ENCODE measurements at regions of chr12 and their contacts with region 1.

Region 1: DNA sequence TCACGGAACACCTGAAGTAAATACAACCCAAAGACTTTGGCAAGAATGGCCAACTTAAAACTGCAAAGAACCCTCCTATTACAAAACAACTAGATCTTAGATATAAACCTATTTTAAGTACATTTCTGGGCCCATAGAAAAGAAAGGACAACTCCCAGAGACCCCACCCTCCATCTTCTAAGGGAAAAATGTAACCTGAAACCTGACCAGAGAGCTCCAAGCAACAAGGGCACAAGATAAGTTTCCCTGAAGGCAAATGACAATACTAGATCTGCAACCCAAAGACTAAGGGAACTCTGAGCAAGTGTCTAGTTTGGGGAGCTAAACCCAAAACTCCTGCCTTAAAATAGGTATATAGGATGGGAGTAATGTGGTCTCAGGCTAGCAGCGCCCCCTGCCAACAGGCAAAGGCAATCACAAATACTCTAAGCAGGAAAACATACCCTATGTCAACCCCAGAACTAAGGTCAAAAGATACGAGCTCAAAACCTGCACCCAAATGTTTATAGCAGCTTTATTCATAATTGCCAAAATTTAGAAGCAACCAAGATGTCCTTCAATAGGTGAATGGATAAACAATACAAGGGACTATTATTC is 218.9 kb downstream of the ITPR2 start:
- DNase-seq: peak; percentile 60
- ATAC-seq: peak; percentile 96
- H3K4me3 Mint-ChIP-seq: no peak overlapping the region
- H3K27ac Mint-ChIP-seq: peak overlapping the region; percentile 30; the same call in 1 of the 2 replicates
- H3K4me1 Mint-ChIP-seq: peaks cover 7% of the 10 kb centered on the region
- H3K27me3 Mint-ChIP-seq: no peaks in the 10 kb centered on the region
- CTCF ChIP-seq: peak; percentile 66

Region 2: GRCh38 chr12:26119391-26119981 is 494.6 kb before region 1 on chr12:
- CTCF ChIA-PET with region 1: interaction called, 13 read pairs
- POLR2A ChIA-PET with region 1: no interaction called
- DNase-seq: no peak
- ATAC-seq: peak; percentile 19
- H3K4me3 Mint-ChIP-seq: no peak overlapping the region
- H3K27ac Mint-ChIP-seq: no peak overlapping the region
- H3K4me1 Mint-ChIP-seq: peaks cover 59% of the 10 kb centered on the region
- H3K27me3 Mint-ChIP-seq: peaks cover 64% of the 10 kb centered on the region
- CTCF ChIP-seq: no peak

Region 3: DNA sequence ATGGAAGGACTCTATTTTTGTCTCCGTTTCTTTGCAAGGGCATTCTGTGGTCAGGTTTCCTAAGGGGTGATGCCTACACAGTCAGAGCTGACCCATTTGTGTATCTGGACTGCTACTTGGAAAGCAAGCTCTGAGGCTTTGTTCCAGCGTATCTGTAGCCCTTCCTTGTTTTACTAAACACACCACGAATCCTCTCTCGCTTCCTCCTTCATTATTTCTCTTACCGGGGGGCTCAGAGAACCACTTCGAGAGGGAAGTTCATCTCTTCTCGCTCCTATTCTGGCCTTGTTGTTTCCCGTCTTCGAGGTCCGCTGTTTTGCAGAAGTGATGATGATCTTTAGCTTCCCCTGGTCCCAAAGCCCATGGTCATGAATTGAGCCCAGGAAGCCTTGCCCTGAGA is 254.1 kb before region 1 on chr12:
- CTCF ChIA-PET with region 1: no interaction called
- POLR2A ChIA-PET with region 1: no interaction called
- DNase-seq: no peak
- ATAC-seq: no peak
- H3K4me3 Mint-ChIP-seq: no peak overlapping the region
- H3K27ac Mint-ChIP-seq: no peak overlapping the region
- H3K4me1 Mint-ChIP-seq: peaks cover 4% of the 10 kb centered on the region; the same call in 1 of the 2 replicates
- H3K27me3 Mint-ChIP-seq: no peaks in the 10 kb centered on the region
- CTCF ChIP-seq: no peak

Region 4: DNA sequence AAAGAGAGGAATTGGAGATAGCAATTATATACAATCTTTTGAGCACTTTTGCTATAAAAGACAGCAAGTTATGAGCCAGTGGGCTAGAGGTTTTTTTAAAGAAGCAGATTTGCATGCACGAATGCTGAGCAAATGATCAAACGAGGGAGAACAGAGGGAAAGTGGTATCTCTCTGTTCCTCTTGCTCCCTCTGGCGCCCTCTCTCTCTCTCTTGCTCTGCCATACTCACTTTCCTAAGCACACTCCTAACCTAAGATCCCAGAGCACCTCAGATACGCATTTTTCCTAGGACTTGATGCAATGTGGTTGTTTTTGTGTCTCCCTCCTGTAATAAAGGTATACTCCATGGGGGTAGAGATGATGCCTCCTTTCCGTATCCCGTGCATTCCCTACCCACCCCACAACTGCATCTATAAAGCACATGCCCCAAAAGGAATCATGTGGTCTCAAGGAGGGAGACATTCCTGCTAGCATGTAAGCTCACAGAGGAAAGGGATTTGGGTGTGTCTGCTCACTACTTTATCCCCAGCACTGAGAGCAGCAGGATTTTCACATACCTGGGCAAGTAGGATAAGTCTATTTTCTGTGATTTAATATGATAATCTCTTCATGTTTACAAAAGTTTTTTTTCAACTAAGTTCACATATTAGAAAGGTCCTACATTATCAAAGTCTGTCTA is 148.6 kb before region 1 on chr12:
- CTCF ChIA-PET with region 1: interaction called, 13 read pairs
- POLR2A ChIA-PET with region 1: no interaction called
- DNase-seq: no peak
- ATAC-seq: peak; percentile 89
- H3K4me3 Mint-ChIP-seq: no peak overlapping the region
- H3K27ac Mint-ChIP-seq: peak overlapping the region; percentile 39; the same call in 1 of the 2 replicates
- H3K4me1 Mint-ChIP-seq: peaks cover 32% of the 10 kb centered on the region
- H3K27me3 Mint-ChIP-seq: no peaks in the 10 kb centered on the region
- CTCF ChIP-seq: no peak

Region 5: DNA sequence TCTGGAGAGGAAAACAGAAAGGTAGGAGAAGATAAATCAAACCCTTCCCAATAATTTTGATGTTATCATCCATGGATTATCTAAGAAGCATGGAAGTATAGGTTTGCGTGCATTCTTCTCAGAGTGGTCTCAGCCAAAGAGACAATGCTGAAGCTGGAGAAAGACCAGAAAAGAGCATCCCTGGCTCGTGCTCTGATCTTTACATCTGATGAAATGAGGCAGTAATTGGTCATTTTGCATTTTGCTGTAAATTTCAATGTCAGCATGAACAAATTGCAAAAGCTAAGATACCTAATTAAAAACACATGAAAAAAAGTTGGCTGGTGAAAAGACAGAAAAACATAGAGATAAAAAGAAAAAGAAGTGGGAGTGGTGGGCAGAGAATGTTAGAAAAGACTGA is 33.5 kb before region 1 on chr12:
- CTCF ChIA-PET with region 1: interaction called, 14 read pairs
- POLR2A ChIA-PET with region 1: no interaction called
- DNase-seq: no peak
- ATAC-seq: no peak
- H3K4me3 Mint-ChIP-seq: no peak overlapping the region
- H3K27ac Mint-ChIP-seq: no peak overlapping the region; the same call in 1 of the 2 replicates
- H3K4me1 Mint-ChIP-seq: no peaks in the 10 kb centered on the region
- H3K27me3 Mint-ChIP-seq: no peaks in the 10 kb centered on the region
- CTCF ChIP-seq: no peak

Region 6: DNA sequence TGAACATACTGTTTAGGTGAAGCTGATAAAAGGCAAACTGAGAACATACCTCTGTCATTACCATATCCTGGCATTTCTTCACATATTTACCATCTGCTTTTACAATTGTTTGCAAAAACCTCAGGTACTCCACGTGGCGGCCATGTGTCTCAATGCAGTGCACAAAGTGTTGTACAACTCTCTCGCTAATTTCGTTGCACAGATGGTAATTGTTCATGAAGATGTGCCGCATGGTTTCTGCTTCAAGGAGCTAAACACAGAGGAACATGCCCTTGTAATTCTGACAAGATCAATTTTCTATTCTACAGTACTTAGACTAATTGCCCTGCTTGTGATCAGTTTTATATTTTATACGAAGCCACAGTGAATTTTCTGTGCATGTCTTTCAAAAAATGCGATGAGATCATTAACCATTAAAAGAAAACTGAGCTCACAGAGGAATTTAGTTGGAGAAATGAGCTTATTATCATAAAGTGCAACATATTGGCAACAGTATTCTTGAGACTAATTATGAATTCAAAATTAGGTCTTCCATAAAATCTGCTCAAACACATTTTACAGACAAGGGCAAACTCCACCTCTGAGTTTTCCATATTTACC is 14.9 kb before region 1 on chr12:
- CTCF ChIA-PET with region 1: interaction called, 36 read pairs
- POLR2A ChIA-PET with region 1: no interaction called
- DNase-seq: no peak
- ATAC-seq: no peak
- H3K4me3 Mint-ChIP-seq: no peak overlapping the region
- H3K27ac Mint-ChIP-seq: no peak overlapping the region
- H3K4me1 Mint-ChIP-seq: no peaks in the 10 kb centered on the region
- H3K27me3 Mint-ChIP-seq: no peaks in the 10 kb centered on the region
- CTCF ChIP-seq: no peak

Region 7: DNA sequence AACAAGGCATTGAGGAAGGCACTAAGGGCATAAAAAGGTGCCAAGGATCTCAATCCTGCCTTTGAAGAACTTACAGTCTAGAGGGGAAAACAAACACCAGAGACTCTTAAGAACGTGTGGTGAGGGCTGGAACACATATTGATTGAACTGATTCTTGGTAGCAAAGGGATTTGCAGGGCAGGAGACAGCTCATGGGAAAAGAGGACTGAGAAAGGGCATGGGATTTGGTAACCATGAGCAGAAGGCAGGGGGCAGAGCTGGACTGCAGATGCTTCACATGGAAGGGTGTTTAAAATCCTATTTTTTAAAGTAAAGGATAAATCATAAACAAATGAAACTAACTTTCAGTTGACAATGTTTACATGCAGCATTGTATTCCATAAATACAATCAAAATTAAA is 15.7 kb after region 1 on chr12:
- CTCF ChIA-PET with region 1: interaction called, 15 read pairs
- POLR2A ChIA-PET with region 1: interaction called, 7 read pairs
- DNase-seq: no peak
- ATAC-seq: peak; percentile 36; the same call in 1 of the 2 replicates
- H3K4me3 Mint-ChIP-seq: no peak overlapping the region
- H3K27ac Mint-ChIP-seq: peak overlapping the region; percentile 40
- H3K4me1 Mint-ChIP-seq: peaks cover 37% of the 10 kb centered on the region
- H3K27me3 Mint-ChIP-seq: no peaks in the 10 kb centered on the region
- CTCF ChIP-seq: no peak

Region 8: GRCh38 chr12:26701604-26702215 is 87.6 kb after region 1 on chr12:
- CTCF ChIA-PET with region 1: interaction called, 21 read pairs
- POLR2A ChIA-PET with region 1: no interaction called
- DNase-seq: no peak
- ATAC-seq: peak; percentile 46
- H3K4me3 Mint-ChIP-seq: no peak overlapping the region
- H3K27ac Mint-ChIP-seq: no peak overlapping the region
- H3K4me1 Mint-ChIP-seq: peaks cover 30% of the 10 kb centered on the region
- H3K27me3 Mint-ChIP-seq: no peaks in the 10 kb centered on the region
- CTCF ChIP-seq: peak; percentile 42

Measured in WTC11 (cell line).